ENCODE measurements at regions of chr16 and their contacts with region 1.

Region 1: GRCh38 chr16:2513405-2514322 is at the start of gene ATP6V0C:
- DNase-seq: peak; percentile 94
- H3K4me3 ChIP-seq: peak within 1 kb of the TSS; percentile 58
- H3K27ac ChIP-seq: peak within 1 kb of the TSS; percentile 79
- H3K4me1 ChIP-seq: peaks cover 20% of the 10 kb centered on the region
- H3K27me3 ChIP-seq: no peaks in the 10 kb centered on the region
- CTCF ChIP-seq: no peak
- total RNA-seq, gene ATP6V0C: 240 to 336 TPM

Region 2: DNA sequence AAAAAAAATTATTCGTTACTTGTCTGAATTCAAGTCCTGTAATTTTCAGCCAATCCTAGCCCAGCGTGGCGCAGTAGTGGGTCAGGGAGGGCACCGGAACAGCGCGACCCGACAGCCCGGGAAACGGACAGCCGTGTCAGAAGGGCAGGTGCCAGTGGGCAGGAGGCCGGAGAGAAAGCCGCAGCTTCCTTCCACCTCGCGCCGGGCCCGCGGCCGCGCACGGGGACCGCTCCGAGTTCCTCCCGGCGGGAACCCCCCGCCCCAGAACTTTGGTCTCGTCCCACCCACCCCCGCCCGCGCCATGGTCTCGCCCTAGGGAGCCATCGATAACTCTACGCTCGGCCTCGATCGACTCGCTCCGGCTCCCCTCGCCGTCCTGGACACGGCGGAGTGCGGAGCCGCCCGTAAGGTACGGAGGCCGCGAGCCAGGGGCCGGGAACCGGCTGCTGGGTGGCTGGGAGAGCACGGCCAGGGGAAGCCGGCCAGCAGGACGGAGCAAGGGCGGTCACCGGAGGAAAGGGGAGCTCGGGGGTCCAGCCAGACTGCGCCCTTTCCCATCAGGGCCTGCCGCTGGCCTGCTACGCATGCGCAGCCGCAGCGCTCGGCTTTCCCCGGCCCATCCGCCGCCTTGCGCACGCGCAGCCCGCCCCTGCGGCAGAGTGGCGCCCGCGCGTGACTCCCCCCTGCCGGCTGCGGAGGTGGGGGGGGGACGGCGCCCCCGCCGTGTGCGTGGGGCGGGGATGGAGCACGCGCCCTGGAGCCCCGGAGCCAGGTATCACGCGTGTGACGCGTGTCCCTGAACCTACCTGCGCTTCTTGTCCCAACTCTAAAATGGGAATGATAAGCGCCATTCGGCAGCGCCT is 308.3 kb before region 1 on chr16 and contains the start of gene MLST8:
- intact Hi-C with region 1: loop called (anchors 10 kb)
- DNase-seq: peak; percentile 83
- H3K4me3 ChIP-seq: peak within 1 kb of the TSS; percentile 58
- H3K27ac ChIP-seq: peak within 1 kb of the TSS; percentile 92
- H3K4me1 ChIP-seq: peaks cover 12% of the 10 kb centered on the region
- H3K27me3 ChIP-seq: no peaks in the 10 kb centered on the region
- CTCF ChIP-seq: no peak
- total RNA-seq, gene MLST8: 26.5 to 53.5 TPM

Measured in colonic mucosa (tissue), 4 donors.